KBM-7 (cell line): ENCODE measurements at regions of chr3 and their contacts with region 1.

Region 1: DNA sequence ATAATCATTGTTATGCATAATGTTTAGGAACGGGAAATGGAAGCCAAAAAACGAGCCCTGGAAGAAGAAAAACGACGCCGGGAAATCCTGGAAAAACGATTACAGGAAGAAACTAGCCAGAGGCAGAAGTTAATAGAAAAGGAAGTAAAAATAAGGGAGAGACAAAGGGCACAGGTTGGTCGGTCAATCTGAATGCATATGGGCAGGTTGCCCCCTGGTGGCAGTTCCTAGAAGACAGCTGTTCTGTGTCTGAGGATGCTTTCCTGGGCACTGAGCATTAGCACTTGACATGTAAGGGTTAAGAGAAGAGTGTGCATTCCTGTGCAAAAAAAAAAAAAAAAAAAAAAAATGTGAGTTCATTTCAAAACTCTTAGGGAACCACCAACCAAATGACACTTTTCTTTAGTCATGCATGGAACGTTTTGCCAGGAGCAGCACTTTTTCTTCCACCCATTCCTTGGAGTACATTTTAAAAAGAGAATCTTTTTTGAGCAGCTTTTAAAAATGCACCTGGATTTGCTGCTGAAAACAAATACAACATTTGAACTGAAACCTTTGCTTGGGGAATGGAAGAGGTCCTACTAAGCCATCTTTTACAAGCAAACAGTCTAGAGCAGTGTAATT is 11.1 kb upstream of the ABHD10 start:
- DNase-seq: peak; percentile 85

Region 2: DNA sequence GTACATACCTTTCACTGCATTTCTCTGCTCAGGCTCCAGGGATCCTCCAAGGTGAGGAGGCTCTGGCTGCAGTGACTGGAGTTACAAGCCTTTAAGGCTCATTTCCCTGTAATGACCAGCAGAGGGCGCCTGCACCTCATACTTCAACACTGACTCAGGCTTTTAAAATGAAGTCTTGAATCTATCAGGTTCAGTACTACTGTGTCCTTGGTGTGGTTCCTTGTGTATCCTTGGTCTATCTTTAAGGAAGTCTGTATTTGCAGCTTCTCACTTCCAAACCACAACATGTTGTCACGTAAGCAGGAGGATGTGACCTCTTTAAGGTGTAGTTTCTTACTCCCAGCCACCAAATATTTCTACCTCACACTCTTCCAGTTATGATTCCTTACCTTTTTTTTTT is 250.2 kb before region 1 on chr3:
- in situ Hi-C with region 1: loop called (anchors 25 kb)
- DNase-seq: peak; percentile 74